ENCODE measurements at regions of chr15 and their contacts with region 1.

Region 1: DNA sequence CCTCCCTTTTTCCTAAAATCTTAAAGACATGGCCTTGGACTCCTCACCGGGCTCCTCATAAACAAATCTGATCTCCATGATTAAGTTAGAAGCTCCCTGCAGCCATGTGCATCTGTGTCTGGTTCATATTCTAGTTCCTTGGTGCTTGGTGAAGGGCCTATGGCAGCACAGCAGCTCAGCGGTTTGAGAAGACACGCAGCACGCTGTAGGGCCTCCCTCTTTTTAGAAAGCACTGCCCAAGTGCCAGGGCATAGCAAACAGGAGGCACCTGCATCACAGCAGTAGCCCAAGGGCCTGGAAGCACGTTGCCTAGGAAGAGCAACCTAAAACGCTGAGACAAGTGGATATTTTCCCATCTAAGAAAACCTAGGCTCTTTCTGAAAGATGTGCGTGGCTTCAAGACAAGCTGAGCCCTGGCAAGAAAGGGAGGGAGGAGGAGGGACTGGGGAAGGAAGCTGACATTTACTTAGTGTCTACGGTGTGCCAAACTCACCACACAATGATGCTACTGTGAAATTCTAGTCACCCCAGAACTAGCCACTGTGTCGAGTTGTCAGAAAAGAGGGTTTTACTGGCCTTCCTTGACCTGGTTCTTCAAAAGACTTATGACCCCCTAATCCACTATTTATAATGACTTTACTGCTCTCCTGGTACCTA is 14.9 kb upstream of the ULK3 start:
- DNase-seq: no peak
- H3K4me3 ChIP-seq: no peak overlapping the region
- H3K27ac ChIP-seq: peak overlapping the region in 1 of 2 experiments; percentile 3; a peak in 1 of 4 replicates
- H3K4me1 ChIP-seq: peaks cover 0 to 18% of the 10 kb centered on the region in 2 experiments; a peak in 1 of 4 replicates
- H3K27me3 ChIP-seq: no peaks in the 10 kb centered on the region
- CTCF ChIP-seq: no peak
- EP300 ChIP-seq: no peak
- RAD21 ChIP-seq: no peak

Region 2: GRCh38 chr15:74842581-74843444 is 15.0 kb before region 1 on chr15 and contains the start of gene ULK3:
- CTCF ChIA-PET with region 1: interaction called, 12 read pairs
- POLR2A ChIA-PET with region 1: interaction called, 4 read pairs
- DNase-seq: peak; percentile 99
- H3K4me3 ChIP-seq: peak within 1 kb of the TSS; percentile 98
- H3K27ac ChIP-seq: peak within 1 kb of the TSS; percentile 72 to 88
- H3K4me1 ChIP-seq: peaks cover 0 to 23% of the 10 kb centered on the region in 2 experiments; a peak in 2 of 4 replicates
- H3K27me3 ChIP-seq: no peaks in the 10 kb centered on the region
- CTCF ChIP-seq: peak; percentile 50
- EP300 ChIP-seq: no peak
- RAD21 ChIP-seq: peak; percentile 34; the same call in 1 of the 2 replicates
- polyA plus RNA-seq, gene ULK3: 41.3 and 55.3 TPM in 2 replicates

Region 3: GRCh38 chr15:74869726-74870407 is 12.0 kb after region 1 on chr15:
- CTCF ChIA-PET with region 1: interaction called, 16 read pairs
- POLR2A ChIA-PET with region 1: interaction called, 4 read pairs
- DNase-seq: peak; percentile 60
- H3K4me3 ChIP-seq: no peak overlapping the region
- H3K27ac ChIP-seq: no peak overlapping the region; a peak in 1 of 4 replicates
- H3K4me1 ChIP-seq: peaks cover 17 to 20% of the 10 kb centered on the region in 2 experiments; a peak in 2 of 4 replicates
- H3K27me3 ChIP-seq: no peaks in the 10 kb centered on the region
- CTCF ChIP-seq: no peak
- EP300 ChIP-seq: no peak
- RAD21 ChIP-seq: no peak

Region 4: GRCh38 chr15:74995241-74995778 is 137.5 kb after region 1 on chr15 and contains the start of gene SCAMP5:
- CTCF ChIA-PET with region 1: no interaction called
- POLR2A ChIA-PET with region 1: no interaction called
- DNase-seq: peak; percentile 97
- H3K4me3 ChIP-seq: peak within 1 kb of the TSS; percentile 67 to 84
- H3K27ac ChIP-seq: peak within 1 kb of the TSS in 1 of 2 experiments; percentile 90; a peak in 2 of 4 replicates
- H3K4me1 ChIP-seq: peaks cover 0 to 17% of the 10 kb centered on the region in 2 experiments; a peak in 1 of 4 replicates
- H3K27me3 ChIP-seq: no peaks in the 10 kb centered on the region
- CTCF ChIP-seq: no peak
- EP300 ChIP-seq: 0 out of 4 replicates have a peak, but pooled peaks of 1 of the 2 experiments have one; percentile 2
- RAD21 ChIP-seq: no peak
- polyA plus RNA-seq, gene SCAMP5: 27.9 and 32.7 TPM in 2 replicates